ENCODE measurements at regions of chr9 and their contacts with region 1.

Region 1: GRCh38 chr9:128191406-128192046 is at the start of gene CIZ1:
- DNase-seq: peak; percentile 74
- H3K4me3 Mint-ChIP-seq: peak within 1 kb of the TSS; percentile 91
- H3K27ac Mint-ChIP-seq: peak within 1 kb of the TSS; percentile 93
- H3K4me1 Mint-ChIP-seq: peaks cover 4% of the 10 kb centered on the region
- H3K27me3 Mint-ChIP-seq: no peaks in the 10 kb centered on the region
- CTCF ChIP-seq: peak; percentile 76
- total RNA-seq, gene CIZ1: 133 and 151 TPM in 2 replicates

Region 2: GRCh38 chr9:128127990-128128835 is 63.3 kb before region 1 on chr9:
- CTCF ChIA-PET with region 1: no interaction called
- POLR2A ChIA-PET with region 1: interaction called, 4 read pairs
- intact Hi-C with region 1: loop called (anchors 5 kb)
- DNase-seq: peak; percentile 92
- H3K4me3 Mint-ChIP-seq: peak overlapping the region; percentile 84
- H3K27ac Mint-ChIP-seq: peak overlapping the region; percentile 97
- H3K4me1 Mint-ChIP-seq: peaks cover 23% of the 10 kb centered on the region
- H3K27me3 Mint-ChIP-seq: peaks cover 9% of the 10 kb centered on the region
- CTCF ChIP-seq: no peak

Region 3: DNA sequence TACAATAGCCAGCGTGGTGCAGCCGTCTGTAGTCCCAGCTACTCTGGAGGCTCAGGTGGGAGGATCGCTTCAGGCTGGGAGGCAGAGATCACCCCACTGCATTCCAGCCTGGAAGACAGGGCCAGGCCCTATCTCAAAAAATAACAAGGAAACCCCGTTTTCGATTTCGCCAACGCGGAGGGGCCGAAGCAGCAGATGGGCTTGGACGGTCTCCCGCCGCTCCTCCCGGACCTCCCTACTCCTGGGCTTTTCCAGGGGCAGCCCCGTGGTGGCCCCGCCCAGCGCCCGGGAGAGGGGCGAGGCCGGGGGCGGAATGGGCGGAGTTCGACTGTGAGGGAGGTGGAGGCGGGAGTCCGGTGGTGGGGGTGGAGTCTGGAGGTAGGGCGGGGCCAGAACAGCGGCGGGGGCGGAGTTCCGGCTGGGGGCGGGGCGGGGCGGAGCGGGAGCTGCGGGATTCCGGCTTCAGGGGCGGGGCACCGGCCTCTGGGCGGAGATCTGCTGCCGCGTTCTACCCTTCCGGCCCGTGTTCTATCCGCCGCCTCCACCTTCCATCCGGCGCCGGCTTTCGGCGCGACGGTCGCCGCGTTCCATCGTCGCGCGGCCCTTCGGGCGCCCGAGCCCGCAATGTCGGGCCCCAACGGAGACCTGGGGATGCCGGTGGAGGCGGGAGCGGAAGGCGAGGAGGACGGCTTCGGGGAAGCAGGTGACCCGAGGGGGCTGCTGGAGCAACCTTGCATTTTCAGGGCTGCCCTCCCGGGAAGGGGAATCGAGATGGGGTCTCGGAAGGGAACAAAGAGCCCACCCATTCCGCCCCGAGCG is 31.5 kb before region 1 on chr9 and contains the start of gene BBLN:
- CTCF ChIA-PET with region 1: interaction called, 4 read pairs
- POLR2A ChIA-PET with region 1: interaction called, 11 read pairs
- intact Hi-C with region 1: no loop called
- DNase-seq: peak; percentile 94
- H3K4me3 Mint-ChIP-seq: peak within 1 kb of the TSS; percentile 70
- H3K27ac Mint-ChIP-seq: peak within 1 kb of the TSS; percentile 71
- H3K4me1 Mint-ChIP-seq: peaks cover 18% of the 10 kb centered on the region
- H3K27me3 Mint-ChIP-seq: no peaks in the 10 kb centered on the region
- CTCF ChIP-seq: no peak
- total RNA-seq, gene BBLN: 68.6 and 70.4 TPM in 2 replicates

Region 4: DNA sequence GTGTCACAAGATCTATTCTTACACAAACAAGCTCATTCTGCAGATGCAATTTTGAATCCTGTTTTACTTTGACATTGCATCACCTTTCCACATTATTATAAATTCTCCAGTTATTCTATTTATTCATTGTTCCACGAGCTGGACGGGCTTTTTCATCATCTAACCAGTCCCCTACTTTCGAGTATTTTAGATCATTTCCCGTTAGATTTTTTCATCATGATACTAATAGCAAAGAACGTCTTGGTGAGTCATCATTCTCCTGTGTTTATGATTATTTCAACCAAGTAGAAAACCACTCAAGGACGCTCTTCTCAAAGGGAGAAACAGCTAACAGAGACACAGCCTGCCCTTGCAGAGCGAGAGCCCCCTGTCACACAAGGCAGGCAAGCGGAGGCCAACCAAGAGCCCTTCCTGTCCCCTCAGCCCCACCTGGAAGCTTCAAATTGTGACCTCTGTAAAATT is 16.4 kb before region 1 on chr9:
- CTCF ChIA-PET with region 1: interaction called, 6 read pairs
- POLR2A ChIA-PET with region 1: interaction called, 10 read pairs
- intact Hi-C with region 1: no loop called
- DNase-seq: no peak
- H3K4me3 Mint-ChIP-seq: no peak overlapping the region
- H3K27ac Mint-ChIP-seq: no peak overlapping the region
- H3K4me1 Mint-ChIP-seq: no peaks in the 10 kb centered on the region
- H3K27me3 Mint-ChIP-seq: no peaks in the 10 kb centered on the region
- CTCF ChIP-seq: no peak

Measured in MCF 10A (cell line).